ENCODE measurements at regions of chr2 and their contacts with region 1.

Region 1: GRCh38 chr2:64523666-64524603 is at the start of gene AFTPH:
- DNase-seq: peak; percentile 99
- ATAC-seq: peak; percentile 94 to 95
- H3K4me3 ChIP-seq: peak within 1 kb of the TSS; percentile 86 to 97 (median 90)
- H3K27ac ChIP-seq: peak within 1 kb of the TSS; percentile 91 to 97 (median 94)
- H3K4me1 ChIP-seq: peaks cover 29 to 32% of the 10 kb centered on the region in 2 donors
- H3K27me3 ChIP-seq: no peaks in the 10 kb centered on the region
- CTCF ChIP-seq: no peak
- POLR2A ChIP-seq: peak; percentile 93 to 97
- total RNA-seq, gene AFTPH: 13.9 to 18.1 (median 14.8) TPM

Region 2: GRCh38 chr2:64453770-64454385 is 70.1 kb before region 1 on chr2 and contains the start of gene LGALSL:
- in situ Hi-C with region 1: no loop called
- intact Hi-C with region 1: loop called (anchors 5 kb)
- DNase-seq: peak; percentile 60 to 76
- ATAC-seq: peak; percentile 70 to 72
- H3K4me3 ChIP-seq: peak within 1 kb of the TSS; percentile 72 to 93 (median 82)
- H3K27ac ChIP-seq: peak within 1 kb of the TSS; percentile 94 to 99 (median 96)
- H3K4me1 ChIP-seq: peaks cover 29 to 50% of the 10 kb centered on the region in 2 donors
- H3K27me3 ChIP-seq: no peaks in the 10 kb centered on the region
- CTCF ChIP-seq: no peak
- POLR2A ChIP-seq: peak; percentile 64 to 65
- total RNA-seq, gene LGALSL: 3.8 to 19.6 (median 6.5) TPM

Region 3: GRCh38 chr2:64562148-64562784 is 38.3 kb after region 1 on chr2:
- in situ Hi-C with region 1: no loop called
- intact Hi-C with region 1: loop called (anchors 2 kb)
- DNase-seq: no peak
- ATAC-seq: no peak
- H3K4me3 ChIP-seq: no peak overlapping the region
- H3K27ac ChIP-seq: no peak overlapping the region
- H3K4me1 ChIP-seq: peaks cover 5 to 16% of the 10 kb centered on the region in 2 donors
- H3K27me3 ChIP-seq: no peaks in the 10 kb centered on the region
- CTCF ChIP-seq: peak in 2 of 5 experiments; percentile 40 to 41
- POLR2A ChIP-seq: no peak

Region 4: GRCh38 chr2:64859312-64860212 is 335.6 kb after region 1 on chr2:
- in situ Hi-C with region 1: loop called in 1 of 4 experiments (anchors 10 kb)
- intact Hi-C with region 1: loop called (anchors 1 kb)
- DNase-seq: peak; percentile 93 to 98
- ATAC-seq: peak; percentile 85 to 86
- H3K4me3 ChIP-seq: peak overlapping the region; percentile 55 to 74 (median 58)
- H3K27ac ChIP-seq: peak overlapping the region; percentile 87 to 98 (median 96)
- H3K4me1 ChIP-seq: peaks cover 26 to 38% of the 10 kb centered on the region in 2 donors
- H3K27me3 ChIP-seq: no peaks in the 10 kb centered on the region
- CTCF ChIP-seq: peak in 2 of 5 experiments; percentile 8 to 26
- POLR2A ChIP-seq: peak; percentile 32 to 54

Region 5: DNA sequence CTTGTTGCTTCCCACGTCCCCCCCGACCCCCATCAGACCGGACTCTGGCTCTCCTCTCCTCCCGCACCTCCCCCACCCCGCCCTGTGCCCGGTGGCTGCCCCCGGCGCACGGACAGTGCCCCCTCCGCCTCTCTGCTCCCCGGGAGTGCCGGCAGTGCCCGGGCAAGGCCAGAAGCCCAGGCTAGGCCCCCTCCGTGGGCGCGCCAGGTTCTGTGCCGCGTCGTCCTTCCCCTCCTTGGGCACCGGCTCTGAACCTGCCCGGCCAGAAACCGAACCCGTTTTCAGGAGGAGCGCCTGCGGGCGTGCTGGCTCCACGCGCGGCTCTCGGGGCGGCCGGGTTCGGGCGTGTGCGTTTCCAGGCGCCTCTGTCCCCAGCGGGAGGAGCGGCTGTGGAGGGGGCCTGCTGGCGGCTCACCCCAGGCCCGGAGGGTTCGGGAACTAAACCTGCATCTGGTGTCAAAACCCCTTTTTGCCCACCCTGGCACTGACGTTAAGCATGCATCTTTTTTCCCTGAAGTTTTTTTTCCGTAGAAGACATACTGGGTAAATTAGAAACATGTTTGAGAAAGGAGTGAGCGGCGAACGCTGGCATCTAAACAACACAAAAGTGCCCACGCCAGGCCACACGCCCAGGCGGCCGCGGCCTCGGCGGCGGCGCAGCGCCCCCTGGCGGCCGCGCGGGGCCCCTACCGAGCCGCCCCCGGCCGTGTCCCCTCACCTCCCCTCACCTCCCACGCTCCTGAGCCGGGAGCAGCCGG is 341.3 kb after region 1 on chr2:
- in situ Hi-C with region 1: loop called in 2 of 4 experiments (anchors 10 kb)
- intact Hi-C with region 1: loop called (anchors 2 kb)
- DNase-seq: peak; percentile 39 to 58
- ATAC-seq: peak; percentile 90 to 91
- H3K4me3 ChIP-seq: peak overlapping the region; percentile 77 to 80 (median 78)
- H3K27ac ChIP-seq: peak overlapping the region; percentile 77 to 87 (median 84)
- H3K4me1 ChIP-seq: peaks cover 5 to 23% of the 10 kb centered on the region in 2 donors
- H3K27me3 ChIP-seq: no peaks in the 10 kb centered on the region
- CTCF ChIP-seq: peak; percentile 48 to 99 (median 98)
- POLR2A ChIP-seq: no peak

Region 6: GRCh38 chr2:64873472-64873924 is 349.6 kb after region 1 on chr2:
- in situ Hi-C with region 1: loop called in 2 of 4 experiments (anchors 10 kb)
- intact Hi-C with region 1: loop called (anchors 2 kb)
- DNase-seq: peak in 1 of 2 donors; percentile 68
- ATAC-seq: peak; percentile 83 to 90
- H3K4me3 ChIP-seq: peak overlapping the region; percentile 14 to 50 (median 36)
- H3K27ac ChIP-seq: no peak overlapping the region
- H3K4me1 ChIP-seq: peaks cover 0 to 7% of the 10 kb centered on the region in 2 donors
- H3K27me3 ChIP-seq: no peaks in the 10 kb centered on the region
- CTCF ChIP-seq: peak; percentile 90 to 98 (median 92)
- POLR2A ChIP-seq: no peak

Measured in gastrocnemius medialis (tissue), 4 donors.